ENCODE measurements at regions of chr14 and their contacts with region 1.

Region 1: GRCh38 chr14:64338616-64339316 is 44.6 kb upstream of the ESR2 start:
- DNase-seq: peak; percentile 99
- H3K4me3 ChIP-seq: peak overlapping the region; percentile 50 to 56 (median 51)
- H3K27ac ChIP-seq: peak overlapping the region; percentile 14
- H3K4me1 ChIP-seq: peaks cover 10% of the 10 kb centered on the region
- H3K27me3 ChIP-seq: no peaks in the 10 kb centered on the region
- CTCF ChIP-seq: no peak
- POLR2A ChIP-seq: peak; percentile 79

Region 2: DNA sequence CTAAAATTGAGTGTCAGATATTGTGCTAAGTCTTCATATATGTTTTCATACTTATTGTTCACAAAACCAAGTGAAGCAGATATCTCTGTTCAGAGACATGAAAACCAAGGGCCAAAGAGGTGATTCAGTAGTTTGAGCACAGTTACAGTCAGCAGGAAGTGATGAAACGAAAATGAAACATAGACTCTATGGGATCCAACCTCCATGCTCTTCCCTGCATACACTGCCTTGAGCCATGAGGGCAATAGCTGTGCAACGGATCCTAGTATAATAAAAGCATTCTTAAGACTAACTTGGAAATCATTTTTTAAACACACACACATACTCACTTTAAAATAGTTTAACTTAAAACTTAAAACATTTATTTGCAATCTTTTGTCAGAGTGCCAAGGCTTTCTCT is 72.5 kb before region 1 on chr14:
- CTCF ChIA-PET with region 1: no interaction called
- POLR2A ChIA-PET with region 1: no interaction called
- dilution Hi-C with region 1: no loop called
- intact Hi-C with region 1: no loop called
- DNase-seq: peak; percentile 10
- H3K4me3 ChIP-seq: no peak overlapping the region
- H3K27ac ChIP-seq: no peak overlapping the region
- H3K4me1 ChIP-seq: no peaks in the 10 kb centered on the region
- H3K27me3 ChIP-seq: no peaks in the 10 kb centered on the region
- CTCF ChIP-seq: no peak
- POLR2A ChIP-seq: no peak

Region 3: GRCh38 chr14:64387694-64388532 is 49.1 kb after region 1 on chr14 and contains the start of gene MTHFD1:
- CTCF ChIA-PET with region 1: interaction called, 14 read pairs
- POLR2A ChIA-PET with region 1: interaction called, 5 read pairs
- dilution Hi-C with region 1: no loop called
- intact Hi-C with region 1: loop called (anchors 1 kb)
- DNase-seq: peak; percentile 99
- H3K4me3 ChIP-seq: peak within 1 kb of the TSS; percentile 56 to 94 (median 88)
- H3K27ac ChIP-seq: peak within 1 kb of the TSS; percentile 68
- H3K4me1 ChIP-seq: peaks cover 16% of the 10 kb centered on the region
- H3K27me3 ChIP-seq: no peaks in the 10 kb centered on the region
- CTCF ChIP-seq: no peak
- POLR2A ChIP-seq: peak; percentile 48
- total RNA-seq, gene MTHFD1: 104 and 114 TPM in 2 replicates

Region 4: GRCh38 chr14:64434528-64434927 is 95.8 kb after region 1 on chr14:
- CTCF ChIA-PET with region 1: interaction called, 13 read pairs
- POLR2A ChIA-PET with region 1: no interaction called
- dilution Hi-C with region 1: no loop called
- intact Hi-C with region 1: no loop called
- DNase-seq: no peak
- H3K4me3 ChIP-seq: no peak overlapping the region
- H3K27ac ChIP-seq: no peak overlapping the region
- H3K4me1 ChIP-seq: peaks cover 16% of the 10 kb centered on the region
- H3K27me3 ChIP-seq: no peaks in the 10 kb centered on the region
- CTCF ChIP-seq: no peak
- POLR2A ChIP-seq: no peak

Region 5: GRCh38 chr14:64503478-64504309 is 164.9 kb after region 1 on chr14 and contains the start of gene ZBTB25:
- CTCF ChIA-PET with region 1: no interaction called
- POLR2A ChIA-PET with region 1: no interaction called
- dilution Hi-C with region 1: no loop called
- intact Hi-C with region 1: loop called (anchors 1 kb)
- DNase-seq: peak; percentile 95
- H3K4me3 ChIP-seq: peak within 1 kb of the TSS; percentile 71 to 97 (median 93)
- H3K27ac ChIP-seq: peak within 1 kb of the TSS; percentile 95
- H3K4me1 ChIP-seq: peaks cover 38% of the 10 kb centered on the region
- H3K27me3 ChIP-seq: no peaks in the 10 kb centered on the region
- CTCF ChIP-seq: no peak
- POLR2A ChIP-seq: peak; percentile 84
- total RNA-seq, gene ZBTB25: 6.4 and 7.7 TPM in 2 replicates

Region 6: GRCh38 chr14:64540208-64541157 is 201.7 kb after region 1 on chr14 and contains the start of gene HSPA2:
- CTCF ChIA-PET with region 1: no interaction called
- POLR2A ChIA-PET with region 1: no interaction called
- dilution Hi-C with region 1: no loop called
- intact Hi-C with region 1: loop called (anchors 1 kb)
- DNase-seq: peak; percentile 100
- H3K4me3 ChIP-seq: peak within 1 kb of the TSS; percentile 50 to 68 (median 64)
- H3K27ac ChIP-seq: peak within 1 kb of the TSS; percentile 38
- H3K4me1 ChIP-seq: peaks cover 25% of the 10 kb centered on the region
- H3K27me3 ChIP-seq: peaks cover 26 to 29% of the 10 kb centered on the region in 2 experiments
- CTCF ChIP-seq: peak; percentile 86 to 95
- POLR2A ChIP-seq: peak; percentile 74
- total RNA-seq, gene HSPA2: 8.2 and 11.4 TPM in 2 replicates

Region 7: GRCh38 chr14:64891839-64892375 is 553.1 kb after region 1 on chr14:
- CTCF ChIA-PET with region 1: interaction called, 13 read pairs
- POLR2A ChIA-PET with region 1: no interaction called
- dilution Hi-C with region 1: no loop called
- intact Hi-C with region 1: no loop called
- DNase-seq: peak; percentile 72
- H3K4me3 ChIP-seq: no peak overlapping the region
- H3K27ac ChIP-seq: no peak overlapping the region
- H3K4me1 ChIP-seq: no peaks in the 10 kb centered on the region
- H3K27me3 ChIP-seq: peaks cover 10 to 24% of the 10 kb centered on the region in 2 experiments
- CTCF ChIP-seq: peak; percentile 31 to 42
- POLR2A ChIP-seq: no peak

Measured in endothelial cell of umbilical vein (primary cell).